Activated T-helper 2 cell treated with anti-CD3 and anti-CD28 coated beads, Interferon-gamma antibody, Interleukin-2, Interleukin-4, amounts not matched to agents 10 μg/mL and 5 μg/mL and 100 μg/mL, durations not matched to agents 14 hours and 24 hours and 36 hours (primary cell): ENCODE measurements at regions of chr9 and their contacts with region 1.

Region 1: DNA sequence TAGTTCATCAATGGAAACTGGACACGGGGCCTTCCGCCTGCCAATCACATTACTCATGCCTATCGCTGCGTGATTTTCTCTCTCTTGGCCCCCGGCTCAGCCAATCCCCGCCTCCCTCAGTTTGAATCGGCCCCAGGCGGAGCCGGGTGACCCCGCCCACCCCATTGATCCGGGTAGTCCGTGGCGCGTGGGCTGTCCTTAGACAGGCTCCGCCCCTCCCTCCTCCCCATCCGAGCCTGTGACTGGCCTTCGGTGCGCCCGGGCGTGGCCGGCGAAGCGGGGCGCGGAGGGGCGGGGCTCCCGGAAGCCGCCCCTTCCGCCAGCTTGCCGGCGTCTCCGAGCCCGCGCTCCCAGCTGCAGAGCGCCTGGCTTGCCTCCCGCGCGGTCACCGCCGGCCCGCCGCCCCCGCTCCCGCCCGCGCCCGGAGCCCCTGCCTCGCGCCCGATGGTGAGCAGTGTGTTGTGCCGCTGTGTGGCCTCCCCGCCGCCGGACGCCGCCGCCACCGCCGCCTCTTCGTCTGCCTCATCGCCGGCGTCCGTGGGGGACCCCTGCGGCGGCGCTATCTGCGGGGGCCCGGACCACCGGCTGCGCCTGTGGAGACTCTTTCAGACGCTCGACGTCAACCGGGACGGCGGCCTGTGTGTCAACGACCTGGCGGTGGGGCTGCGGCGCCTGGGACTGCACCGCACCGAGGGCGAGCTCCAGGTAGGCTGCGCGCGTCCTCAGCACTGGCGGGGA is at the start of gene SLC25A25:
- DNase-seq: peak; percentile 100
- H3K4me3 Mint-ChIP-seq: peak within 1 kb of the TSS; percentile 93
- H3K27ac Mint-ChIP-seq: peak within 1 kb of the TSS; percentile 73
- H3K4me1 Mint-ChIP-seq: peaks cover 41% of the 10 kb centered on the region
- H3K27me3 Mint-ChIP-seq: no peaks in the 10 kb centered on the region
- total RNA-seq, gene SLC25A25: 11.3 and 11.9 TPM in 2 replicates

Region 2: GRCh38 chr9:127754099-127755050 is 313.7 kb before region 1 on chr9:
- intact Hi-C with region 1: no loop called
- DNase-seq: no peak
- H3K4me3 Mint-ChIP-seq: no peak overlapping the region
- H3K27ac Mint-ChIP-seq: no peak overlapping the region
- H3K4me1 Mint-ChIP-seq: peaks cover 4% of the 10 kb centered on the region
- H3K27me3 Mint-ChIP-seq: no peaks in the 10 kb centered on the region

Region 3: DNA sequence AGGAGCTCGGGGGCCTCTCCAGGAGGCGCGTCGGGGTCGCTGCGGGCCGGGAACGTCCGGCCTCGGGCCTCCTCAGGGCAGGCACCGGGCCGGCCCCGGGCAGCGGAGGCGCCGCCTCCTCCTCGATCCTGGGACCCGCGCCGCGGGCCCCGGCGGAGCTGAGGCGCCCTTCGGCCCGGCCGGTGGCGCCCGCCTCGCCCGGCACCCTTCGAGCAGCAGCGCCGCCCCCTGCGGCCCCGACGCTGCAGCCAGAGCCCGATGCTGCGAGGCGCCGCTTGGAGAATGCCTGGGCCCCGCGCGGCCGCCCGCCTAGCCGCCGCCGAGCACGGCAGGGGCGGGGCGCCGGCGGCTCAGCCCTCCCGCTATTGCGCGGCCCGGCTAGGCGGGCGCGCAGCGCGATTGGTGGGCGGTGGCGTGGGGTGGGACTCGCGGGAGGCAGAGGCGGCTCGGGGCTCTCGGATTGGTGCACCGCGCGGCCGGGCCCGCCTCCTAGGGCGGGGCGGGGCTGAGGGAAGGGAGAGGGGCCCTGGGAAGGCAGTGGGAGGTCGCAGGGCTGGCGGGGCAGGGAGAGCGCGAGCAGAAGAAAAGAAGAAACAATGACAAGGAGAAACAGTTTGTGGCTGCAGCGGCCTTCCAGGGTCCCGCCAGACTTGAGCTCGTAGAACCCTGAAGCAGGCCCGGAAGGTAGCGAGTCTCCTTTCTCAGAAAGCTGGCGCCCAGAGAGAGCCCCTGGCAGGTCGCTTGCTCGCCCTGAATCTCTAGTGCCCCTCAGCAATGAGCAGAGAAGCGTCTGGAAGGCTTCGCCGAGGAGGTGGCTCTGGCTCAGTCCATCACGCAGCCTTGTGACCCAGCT is 87.1 kb before region 1 on chr9 and contains the start of gene EEIG1:
- intact Hi-C with region 1: no loop called
- DNase-seq: peak; percentile 97
- H3K4me3 Mint-ChIP-seq: peak within 1 kb of the TSS; percentile 90
- H3K27ac Mint-ChIP-seq: peak within 1 kb of the TSS; percentile 94
- H3K4me1 Mint-ChIP-seq: peaks cover 49% of the 10 kb centered on the region
- H3K27me3 Mint-ChIP-seq: no peaks in the 10 kb centered on the region
- total RNA-seq, gene EEIG1: 43.8 and 53.3 TPM in 2 replicates

Region 4: GRCh38 chr9:128084746-128085145 is 16.7 kb after region 1 on chr9:
- intact Hi-C with region 1: loop called (anchors 2 kb)
- DNase-seq: no peak
- H3K4me3 Mint-ChIP-seq: no peak overlapping the region
- H3K27ac Mint-ChIP-seq: no peak overlapping the region
- H3K4me1 Mint-ChIP-seq: peaks cover 31% of the 10 kb centered on the region
- H3K27me3 Mint-ChIP-seq: no peaks in the 10 kb centered on the region

Region 5: GRCh38 chr9:128094166-128094967 is 26.3 kb after region 1 on chr9:
- intact Hi-C with region 1: loop called (anchors 1 kb)
- DNase-seq: peak; percentile 77
- H3K4me3 Mint-ChIP-seq: peak overlapping the region; percentile 60
- H3K27ac Mint-ChIP-seq: peak overlapping the region; percentile 98
- H3K4me1 Mint-ChIP-seq: peaks cover 66% of the 10 kb centered on the region
- H3K27me3 Mint-ChIP-seq: no peaks in the 10 kb centered on the region